ENCODE measurements at regions of chr1 and their contacts with region 1.

Region 1: GRCh38 chr1:234683861-234684632 is 74.1 kb upstream of the IRF2BP2 start:
- DNase-seq: peak; percentile 75
- ATAC-seq: peak; percentile 72
- H3K4me3 ChIP-seq: no peak overlapping the region
- H3K27ac ChIP-seq: no peak overlapping the region
- H3K4me1 ChIP-seq: peaks cover 2% of the 10 kb centered on the region; the same call in 1 of the 2 replicates
- H3K27me3 ChIP-seq: no peaks in the 10 kb centered on the region; the same call in 1 of the 2 replicates
- CTCF ChIP-seq: no peak
- POLR2A ChIP-seq: no peak
- RAD21 ChIP-seq: no peak

Region 2: GRCh38 chr1:234643111-234643849 is 40.8 kb before region 1 on chr1:
- CTCF ChIA-PET with region 1: no interaction called
- POLR2A ChIA-PET with region 1: no interaction called
- dilution Hi-C with region 1: no loop called
- in situ Hi-C with region 1: no loop called
- intact Hi-C with region 1: loop called (anchors 5 kb)
- DNase-seq: no peak
- ATAC-seq: no peak
- H3K4me3 ChIP-seq: no peak overlapping the region
- H3K27ac ChIP-seq: no peak overlapping the region
- H3K4me1 ChIP-seq: no peaks in the 10 kb centered on the region
- H3K27me3 ChIP-seq: no peaks in the 10 kb centered on the region
- CTCF ChIP-seq: no peak
- POLR2A ChIP-seq: no peak
- RAD21 ChIP-seq: no peak

Region 3: DNA sequence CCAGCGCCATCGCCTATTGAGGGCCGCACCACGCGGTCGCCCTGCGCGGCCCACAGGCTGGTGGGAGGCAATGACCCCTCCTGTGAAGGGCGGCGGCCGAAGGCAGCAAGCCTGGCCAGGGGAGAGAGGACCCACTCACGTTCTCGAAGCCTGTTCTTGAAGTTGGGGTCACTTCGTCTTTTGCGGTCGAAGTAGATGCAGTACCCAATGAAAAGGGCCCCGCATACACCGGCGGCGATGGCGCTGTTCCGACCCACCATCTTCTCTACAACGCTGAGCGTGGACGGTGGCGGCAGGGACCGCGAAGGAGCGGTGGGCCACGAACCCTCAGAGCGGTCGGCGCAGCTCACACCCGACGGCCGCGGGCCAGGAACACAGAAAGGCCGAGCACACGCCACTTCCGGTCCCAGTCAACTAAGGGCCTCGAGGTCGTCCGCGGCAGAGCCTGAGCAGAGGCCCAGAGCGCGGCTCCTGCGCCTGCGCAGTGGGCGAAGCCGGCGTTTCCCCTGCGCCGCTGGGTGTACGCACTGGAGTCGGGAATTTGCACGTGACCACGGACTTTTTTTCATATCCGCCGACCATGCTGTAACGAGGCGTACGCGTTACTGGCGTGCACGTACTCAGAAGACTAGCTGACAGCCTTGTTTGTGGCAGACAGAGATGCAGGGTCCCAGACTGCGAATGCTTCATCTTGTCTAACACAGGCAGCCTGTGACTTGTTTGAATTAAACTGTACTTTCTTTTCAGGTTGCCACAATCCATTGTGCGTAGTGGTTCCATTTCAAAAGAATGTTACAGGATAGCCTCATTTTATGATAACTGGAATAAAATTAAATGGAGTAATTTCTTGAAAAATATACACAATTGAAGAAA is 444.6 kb after region 1 on chr1 and contains the start of gene TOMM20:
- CTCF ChIA-PET with region 1: no interaction called
- POLR2A ChIA-PET with region 1: no interaction called
- dilution Hi-C with region 1: no loop called
- in situ Hi-C with region 1: no loop called
- intact Hi-C with region 1: no loop called
- DNase-seq: peak; percentile 99
- ATAC-seq: peak; percentile 99
- H3K4me3 ChIP-seq: peak within 1 kb of the TSS; percentile 73
- H3K27ac ChIP-seq: peak within 1 kb of the TSS; percentile 87
- H3K4me1 ChIP-seq: 0 out of 2 replicates have a peak, but pooled peaks cover 1% of the 10 kb centered on the region
- H3K27me3 ChIP-seq: no peaks in the 10 kb centered on the region
- CTCF ChIP-seq: no peak
- POLR2A ChIP-seq: peak; percentile 93
- RAD21 ChIP-seq: no peak
- total RNA-seq, gene TOMM20: 75.3 and 135 TPM in 2 replicates